ENCODE measurements at regions of chr10 and their contacts with region 1.

Region 1: GRCh38 chr10:69506834-69507721 is 55.8 kb downstream of the TSPAN15 start:
- DNase-seq: peak in 1 of 2 donors; percentile 46
- H3K4me3 ChIP-seq: no peak overlapping the region
- H3K27ac ChIP-seq: peak overlapping the region; percentile 26 to 62 (median 48)
- H3K4me1 ChIP-seq: peaks cover 10 to 42% (median 17%) of the 10 kb centered on the region in 4 donors
- H3K27me3 ChIP-seq: no peaks in the 10 kb centered on the region
- CTCF ChIP-seq: no peak
- EP300 ChIP-seq: no peak
- POLR2A ChIP-seq: no peak

Region 2: GRCh38 chr10:68362590-68362989 is 1144.5 kb before region 1 on chr10:
- intact Hi-C with region 1: no loop called
- DNase-seq: no peak
- H3K4me3 ChIP-seq: no peak overlapping the region
- H3K27ac ChIP-seq: no peak overlapping the region
- H3K4me1 ChIP-seq: no peaks in the 10 kb centered on the region
- H3K27me3 ChIP-seq: no peaks in the 10 kb centered on the region
- CTCF ChIP-seq: no peak
- EP300 ChIP-seq: no peak
- POLR2A ChIP-seq: no peak

Region 3: DNA sequence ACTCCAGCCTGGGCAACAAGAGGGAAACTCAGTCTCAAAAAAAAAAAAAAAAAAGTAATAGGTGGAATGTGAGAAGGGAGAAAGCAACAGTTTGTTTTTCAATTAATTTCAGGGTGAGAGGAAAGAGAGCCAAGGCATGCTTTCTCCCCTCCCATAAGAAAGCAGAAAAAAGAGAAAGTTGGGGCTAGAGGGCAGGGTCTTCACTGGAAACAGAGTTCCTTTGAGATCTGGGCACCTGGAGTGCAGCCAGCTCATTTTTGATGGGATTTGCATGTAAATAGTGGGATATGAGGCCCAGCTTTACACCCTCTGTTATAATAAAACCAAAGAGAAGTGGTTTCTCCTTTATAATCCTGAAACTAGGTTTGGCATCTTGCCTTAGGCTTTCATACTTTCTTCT is 693.5 kb before region 1 on chr10:
- intact Hi-C with region 1: no loop called
- DNase-seq: peak in 1 of 2 donors; percentile 7
- H3K4me3 ChIP-seq: no peak overlapping the region
- H3K27ac ChIP-seq: no peak overlapping the region
- H3K4me1 ChIP-seq: no peaks in the 10 kb centered on the region
- H3K27me3 ChIP-seq: no peaks in the 10 kb centered on the region
- CTCF ChIP-seq: no peak
- EP300 ChIP-seq: no peak
- POLR2A ChIP-seq: no peak

Region 4: DNA sequence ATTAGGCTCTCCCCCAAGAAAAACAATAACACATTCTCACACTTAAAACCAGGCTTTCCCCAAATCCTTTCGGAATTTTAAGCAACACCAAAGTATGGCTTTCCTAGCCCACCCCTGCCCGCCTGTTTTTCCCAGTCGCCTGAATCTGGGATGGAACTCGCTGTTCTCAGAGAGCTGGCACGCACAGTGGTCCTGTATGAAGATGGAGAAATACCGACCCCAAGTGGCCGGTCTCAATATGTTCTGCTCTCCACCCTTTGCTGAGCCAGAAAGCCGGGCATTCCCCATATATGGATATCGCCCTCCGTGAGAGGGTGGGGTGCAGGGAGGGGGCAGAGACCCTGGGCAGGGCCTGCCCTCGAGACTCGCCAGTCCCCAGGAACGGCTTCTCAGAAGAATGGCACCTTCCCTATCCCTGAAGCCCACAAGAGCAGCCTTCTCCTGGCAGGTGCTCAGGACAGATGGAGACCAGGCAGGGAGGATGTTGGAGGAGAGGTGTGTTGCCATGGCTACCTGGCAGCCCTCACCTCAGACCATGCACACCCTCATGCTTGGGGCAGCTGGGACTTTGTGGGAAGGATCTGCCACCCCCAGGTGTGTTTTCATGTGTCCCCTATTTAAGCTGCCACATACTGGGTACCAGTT is 93.7 kb before region 1 on chr10:
- intact Hi-C with region 1: loop called (anchors 5 kb)
- DNase-seq: peak; percentile 66 to 88
- H3K4me3 ChIP-seq: peak overlapping the region in 3 of 4 donors; percentile 17 to 40 (median 33)
- H3K27ac ChIP-seq: peak overlapping the region in 4 of 5 donors; percentile 26 to 95 (median 50)
- H3K4me1 ChIP-seq: peaks cover 14 to 48% (median 28%) of the 10 kb centered on the region in 4 donors
- H3K27me3 ChIP-seq: no peaks in the 10 kb centered on the region
- CTCF ChIP-seq: peak in 5 of 7 experiments; percentile 37 to 55 (median 40)
- EP300 ChIP-seq: no peak
- POLR2A ChIP-seq: no peak

Region 5: DNA sequence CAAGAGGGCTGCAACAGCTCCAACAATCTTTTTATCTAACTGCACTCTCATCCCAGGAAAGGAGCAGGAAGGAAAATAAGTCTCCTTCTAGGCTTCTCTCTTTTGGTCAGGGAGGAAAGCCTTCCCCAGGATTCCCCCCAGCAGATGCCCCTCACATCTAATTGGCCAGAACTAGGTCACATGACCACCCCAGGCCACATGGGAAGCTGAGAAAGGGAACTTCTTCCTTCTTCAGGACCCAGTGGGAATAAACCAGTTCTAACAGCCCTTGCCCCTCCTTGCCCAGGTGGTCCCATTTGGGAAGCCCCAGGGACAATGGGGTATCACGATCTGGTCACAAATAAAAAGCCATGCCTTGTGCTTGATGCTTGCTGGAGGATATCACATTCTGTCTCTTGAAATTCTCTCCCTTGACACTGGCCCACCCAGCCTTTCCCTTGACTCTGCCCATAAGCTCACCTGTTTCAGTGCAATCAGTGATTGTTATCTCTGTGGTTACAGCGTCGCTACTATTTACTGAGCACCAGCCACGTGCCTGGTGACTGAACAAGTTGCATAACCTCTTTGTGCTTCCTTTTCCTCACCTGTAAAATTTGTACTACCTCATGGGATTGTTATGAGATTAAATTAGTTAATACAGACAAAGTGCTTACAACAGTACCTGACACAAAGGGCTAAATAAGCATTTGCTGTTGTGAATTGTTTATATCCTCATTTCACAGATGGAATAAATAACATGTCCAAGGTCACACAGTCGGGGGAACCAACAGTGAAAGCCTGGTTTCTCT is 81.4 kb before region 1 on chr10:
- intact Hi-C with region 1: loop called (anchors 5 kb)
- DNase-seq: peak; percentile 77 to 90
- H3K4me3 ChIP-seq: no peak overlapping the region
- H3K27ac ChIP-seq: peak overlapping the region; percentile 71 to 84 (median 82)
- H3K4me1 ChIP-seq: peaks cover 21 to 60% (median 35%) of the 10 kb centered on the region in 4 donors
- H3K27me3 ChIP-seq: no peaks in the 10 kb centered on the region
- CTCF ChIP-seq: no peak
- EP300 ChIP-seq: no peak
- POLR2A ChIP-seq: no peak

Region 6: DNA sequence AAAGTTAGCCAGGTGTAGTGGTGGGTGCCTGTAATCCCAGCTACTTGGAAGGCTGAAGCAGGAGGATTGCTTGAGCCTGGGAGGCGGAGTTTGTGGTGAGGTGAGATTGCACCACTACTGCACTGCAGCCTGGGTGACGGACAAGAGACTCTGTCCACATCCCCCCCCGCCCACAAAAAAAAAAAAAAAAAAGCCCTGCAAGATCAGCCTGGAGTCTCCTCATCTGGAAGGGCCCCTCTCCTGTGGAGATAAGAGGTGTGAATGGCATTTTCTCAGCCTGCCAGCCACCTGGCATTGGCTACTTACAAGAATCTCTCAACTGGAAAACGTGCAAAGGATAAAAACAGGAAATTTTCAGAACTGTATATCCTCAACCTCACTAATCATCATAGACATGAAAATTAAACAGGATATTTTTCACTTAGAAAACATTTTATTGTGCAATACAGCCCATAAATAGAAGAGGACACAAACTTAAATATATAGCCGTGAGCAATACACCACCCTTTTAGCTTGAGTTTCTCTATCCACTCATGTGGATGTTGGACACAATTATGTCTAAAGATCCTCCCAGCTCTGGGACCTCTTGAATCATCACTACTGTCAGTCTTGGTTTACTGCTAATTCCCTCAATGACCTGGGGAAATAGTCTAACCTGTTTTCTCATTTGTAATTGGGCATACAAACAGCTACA is 67.1 kb before region 1 on chr10:
- intact Hi-C with region 1: no loop called
- DNase-seq: peak; percentile 64 to 85
- H3K4me3 ChIP-seq: no peak overlapping the region
- H3K27ac ChIP-seq: peak overlapping the region in 4 of 5 donors; percentile 69 to 90 (median 84)
- H3K4me1 ChIP-seq: peaks cover 21 to 36% (median 23%) of the 10 kb centered on the region in 4 donors
- H3K27me3 ChIP-seq: no peaks in the 10 kb centered on the region
- CTCF ChIP-seq: no peak
- EP300 ChIP-seq: no peak
- POLR2A ChIP-seq: no peak

Region 7: GRCh38 chr10:69612760-69613159 is 105.7 kb after region 1 on chr10:
- intact Hi-C with region 1: no loop called
- DNase-seq: peak in 1 of 2 donors; percentile 35
- H3K4me3 ChIP-seq: no peak overlapping the region
- H3K27ac ChIP-seq: no peak overlapping the region
- H3K4me1 ChIP-seq: no peaks in the 10 kb centered on the region
- H3K27me3 ChIP-seq: no peaks in the 10 kb centered on the region
- CTCF ChIP-seq: no peak
- EP300 ChIP-seq: no peak
- POLR2A ChIP-seq: no peak

Measured in stomach (tissue), 19 donors.